ENCODE measurements at regions of chr9 and their contacts with region 1.

Region 1: GRCh38 chr9:2727966-2728613 is 10.8 kb downstream of the KCNV2 start:
- DNase-seq: peak in 1 of 2 donors; percentile 69
- ATAC-seq: peak; percentile 46 to 89 (median 81)
- H3K4me3 ChIP-seq: no peak overlapping the region
- H3K27ac ChIP-seq: peak overlapping the region in 3 of 10 donors; percentile 12 to 41 (median 24)
- H3K4me1 ChIP-seq: peaks cover 0 to 26% (median 11%) of the 10 kb centered on the region in 9 donors
- H3K27me3 ChIP-seq: no peaks in the 10 kb centered on the region
- CTCF ChIP-seq: peak; percentile 36 to 85 (median 73)

Region 2: DNA sequence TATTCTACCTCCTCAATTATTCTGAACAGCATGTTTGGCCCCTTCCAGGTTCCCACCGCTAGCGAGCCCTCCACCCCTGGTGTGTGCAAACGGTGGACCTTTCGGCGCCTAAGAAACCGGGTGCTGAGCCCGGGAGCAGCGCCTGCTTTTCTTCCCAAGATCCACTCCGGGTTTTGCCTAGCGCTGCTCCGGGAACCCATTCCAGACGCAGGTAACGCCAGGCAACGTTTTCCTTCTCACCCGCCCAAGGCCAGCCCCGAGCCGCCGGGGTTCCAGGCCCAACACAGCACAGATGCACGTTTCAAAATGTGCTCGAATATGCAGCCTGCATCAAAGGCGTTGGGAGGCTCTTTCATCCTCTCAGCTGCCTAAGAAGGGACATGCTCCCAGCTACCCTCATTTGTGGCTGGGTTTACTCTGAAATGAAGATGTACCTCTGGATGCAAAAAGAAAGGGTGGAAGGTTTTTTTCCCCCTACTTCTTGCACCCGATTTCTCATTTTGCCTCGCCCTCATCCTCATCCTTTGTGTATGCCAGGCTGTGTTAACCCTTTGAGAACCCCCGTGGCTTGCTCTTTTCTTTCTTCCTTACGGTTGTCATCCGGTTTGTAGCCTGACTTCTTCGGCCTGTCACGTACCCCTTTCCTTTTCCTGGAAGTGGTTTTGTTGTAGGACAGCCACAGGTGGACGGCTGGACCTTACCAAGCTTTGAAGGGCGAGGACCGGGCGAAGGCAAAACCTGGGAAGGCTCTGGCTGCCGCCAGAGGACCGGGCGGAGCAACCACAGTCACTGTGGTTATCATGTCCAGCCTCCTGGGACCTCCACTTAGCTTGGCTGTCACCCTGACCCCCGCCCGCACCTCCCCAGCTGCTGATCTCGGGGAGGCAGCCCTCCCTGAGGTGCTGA is 486.0 kb before region 1 on chr9:
- intact Hi-C with region 1: loop called in 1 of 10 experiments (anchors 10 kb)
- DNase-seq: peak; percentile 79 to 82
- ATAC-seq: peak; percentile 89 to 97 (median 96)
- H3K4me3 ChIP-seq: peak overlapping the region; percentile 7 to 68 (median 54)
- H3K27ac ChIP-seq: peak overlapping the region in 9 of 10 donors; percentile 54 to 80 (median 67)
- H3K4me1 ChIP-seq: peaks cover 0 to 23% (median 14%) of the 10 kb centered on the region in 9 donors
- H3K27me3 ChIP-seq: no peaks in the 10 kb centered on the region
- CTCF ChIP-seq: peak in 2 of 9 donors; percentile 3 to 24

Region 3: DNA sequence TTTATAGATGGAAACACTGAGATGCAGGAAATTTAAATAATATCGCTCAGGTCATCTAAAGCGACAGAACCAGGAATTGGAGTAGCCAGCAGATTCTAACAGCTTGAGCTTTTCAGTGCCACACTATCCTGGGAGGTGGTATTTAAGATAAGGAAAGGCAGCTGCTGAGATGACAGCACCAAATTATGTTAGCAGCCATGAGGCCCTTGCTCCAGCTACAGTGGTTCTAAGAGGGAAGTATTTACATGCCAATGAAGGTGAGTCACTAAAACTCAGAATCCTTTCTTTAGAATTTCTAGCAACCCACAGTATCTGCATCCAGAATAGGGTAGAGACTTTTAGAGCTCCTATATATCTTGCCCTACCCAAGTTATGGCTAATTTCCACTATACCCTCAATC is 233.5 kb before region 1 on chr9:
- intact Hi-C with region 1: loop called in 1 of 10 experiments (anchors 10 kb)
- DNase-seq: no peak
- ATAC-seq: peak in 2 of 8 donors; percentile 27 to 57
- H3K4me3 ChIP-seq: no peak overlapping the region
- H3K27ac ChIP-seq: peak overlapping the region in 7 of 10 donors; percentile 5 to 84 (median 64)
- H3K4me1 ChIP-seq: peaks cover 2 to 65% (median 29%) of the 10 kb centered on the region in 9 donors
- H3K27me3 ChIP-seq: no peaks in the 10 kb centered on the region
- CTCF ChIP-seq: no peak

Region 4: GRCh38 chr9:2655411-2655901 is 72.6 kb before region 1 on chr9:
- intact Hi-C with region 1: loop called in 4 of 10 experiments (anchors 5 to 10 kb)
- DNase-seq: no peak
- ATAC-seq: peak in 7 of 8 donors; percentile 47 to 82 (median 78)
- H3K4me3 ChIP-seq: no peak overlapping the region
- H3K27ac ChIP-seq: peak overlapping the region in 9 of 10 donors; percentile 13 to 76 (median 54)
- H3K4me1 ChIP-seq: peaks cover 0 to 35% (median 17%) of the 10 kb centered on the region in 9 donors
- H3K27me3 ChIP-seq: no peaks in the 10 kb centered on the region
- CTCF ChIP-seq: no peak